A673 (cell line): ENCODE measurements at regions of chrX and their contacts with region 1.

Region 1: DNA sequence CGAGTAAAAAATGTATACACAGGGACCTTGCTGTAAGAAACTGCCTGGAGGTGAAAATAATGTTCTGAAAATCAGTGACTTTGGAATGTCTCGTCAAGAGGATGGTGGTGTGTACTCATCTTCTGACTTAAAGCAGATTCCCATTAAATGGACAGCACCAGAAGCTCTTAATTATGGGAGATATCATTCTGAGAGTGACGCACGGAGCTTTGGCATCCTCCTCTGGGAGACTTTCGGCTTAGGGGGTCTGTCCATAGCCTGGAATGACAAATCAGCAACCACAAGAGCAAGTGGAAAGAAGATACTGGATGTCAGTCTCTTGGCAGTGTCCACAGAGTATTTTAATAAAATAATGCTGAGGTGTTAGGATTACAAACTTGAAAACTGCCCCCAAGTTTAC is 129.4 kb downstream of the THOC2 start:
- DNase-seq: no peak
- H3K4me3 ChIP-seq: no peak overlapping the region
- H3K27ac ChIP-seq: no peak overlapping the region
- H3K4me1 ChIP-seq: no peaks in the 10 kb centered on the region
- H3K27me3 ChIP-seq: no peaks in the 10 kb centered on the region
- CTCF ChIP-seq: no peak

Region 2: GRCh38 chrX:123732670-123733363 is 129.3 kb after region 1 on chrX and contains the start of gene THOC2:
- CTCF ChIA-PET with region 1: no interaction called
- POLR2A ChIA-PET with region 1: no interaction called
- intact Hi-C with region 1: loop called (anchors 10 kb)
- DNase-seq: peak; percentile 94
- H3K4me3 ChIP-seq: peak within 1 kb of the TSS; percentile 86
- H3K27ac ChIP-seq: peak within 1 kb of the TSS; percentile 90
- H3K4me1 ChIP-seq: peaks cover 6% of the 10 kb centered on the region
- H3K27me3 ChIP-seq: no peaks in the 10 kb centered on the region
- CTCF ChIP-seq: 0 out of 2 replicates have a peak, but pooled peaks have one; percentile 37
- total RNA-seq, gene THOC2: 103 and 104 TPM in 2 replicates